MCF 10A (cell line): ENCODE measurements at regions of chr3 and their contacts with region 1.

Region 1: DNA sequence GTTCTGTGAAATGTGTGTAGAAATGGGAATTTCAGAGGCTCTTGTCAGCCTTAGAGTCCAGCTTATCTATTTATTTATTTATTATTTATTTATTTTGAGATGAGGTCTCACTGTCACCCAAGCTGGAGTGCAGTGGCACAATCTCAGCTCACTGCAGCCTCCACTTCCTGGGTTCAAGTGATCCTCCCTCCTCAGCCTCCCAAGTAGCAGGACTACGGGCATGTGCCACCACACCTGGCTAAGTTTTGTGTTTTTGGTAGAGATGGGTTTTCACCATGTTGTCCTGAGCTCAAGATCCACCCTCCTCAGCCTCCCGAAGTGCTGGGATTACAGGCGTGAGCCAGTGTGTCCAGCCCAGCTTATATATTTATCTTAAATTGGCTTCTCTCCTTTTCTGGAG is 11.5 kb downstream of the CNOT10 start:
- DNase-seq: no peak
- H3K4me3 Mint-ChIP-seq: no peak overlapping the region
- H3K27ac Mint-ChIP-seq: no peak overlapping the region
- H3K4me1 Mint-ChIP-seq: no peaks in the 10 kb centered on the region
- H3K27me3 Mint-ChIP-seq: no peaks in the 10 kb centered on the region
- CTCF ChIP-seq: no peak

Region 2: DNA sequence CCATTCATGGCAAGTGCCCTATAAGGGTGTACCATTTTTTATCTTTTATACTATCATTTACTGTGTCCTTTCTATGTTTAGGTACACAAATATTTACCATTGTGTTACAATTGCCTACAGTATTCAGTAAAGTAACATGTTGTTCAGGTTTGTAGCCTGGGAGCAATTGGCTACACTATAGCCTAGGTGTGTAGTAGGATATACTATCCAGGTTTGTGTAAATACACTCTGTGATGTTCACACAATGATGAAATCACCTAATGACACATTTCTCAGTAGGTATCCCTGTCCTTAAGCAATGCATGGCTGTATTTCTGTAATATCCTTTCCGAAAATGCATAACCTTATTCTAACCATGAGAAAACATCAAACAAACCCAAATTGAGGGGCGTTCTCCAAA is 29.4 kb before region 1 on chr3:
- CTCF ChIA-PET with region 1: no interaction called
- POLR2A ChIA-PET with region 1: no interaction called
- intact Hi-C with region 1: no loop called
- DNase-seq: no peak
- H3K4me3 Mint-ChIP-seq: no peak overlapping the region
- H3K27ac Mint-ChIP-seq: no peak overlapping the region
- H3K4me1 Mint-ChIP-seq: no peaks in the 10 kb centered on the region
- H3K27me3 Mint-ChIP-seq: peaks cover 30% of the 10 kb centered on the region
- CTCF ChIP-seq: no peak

Region 3: DNA sequence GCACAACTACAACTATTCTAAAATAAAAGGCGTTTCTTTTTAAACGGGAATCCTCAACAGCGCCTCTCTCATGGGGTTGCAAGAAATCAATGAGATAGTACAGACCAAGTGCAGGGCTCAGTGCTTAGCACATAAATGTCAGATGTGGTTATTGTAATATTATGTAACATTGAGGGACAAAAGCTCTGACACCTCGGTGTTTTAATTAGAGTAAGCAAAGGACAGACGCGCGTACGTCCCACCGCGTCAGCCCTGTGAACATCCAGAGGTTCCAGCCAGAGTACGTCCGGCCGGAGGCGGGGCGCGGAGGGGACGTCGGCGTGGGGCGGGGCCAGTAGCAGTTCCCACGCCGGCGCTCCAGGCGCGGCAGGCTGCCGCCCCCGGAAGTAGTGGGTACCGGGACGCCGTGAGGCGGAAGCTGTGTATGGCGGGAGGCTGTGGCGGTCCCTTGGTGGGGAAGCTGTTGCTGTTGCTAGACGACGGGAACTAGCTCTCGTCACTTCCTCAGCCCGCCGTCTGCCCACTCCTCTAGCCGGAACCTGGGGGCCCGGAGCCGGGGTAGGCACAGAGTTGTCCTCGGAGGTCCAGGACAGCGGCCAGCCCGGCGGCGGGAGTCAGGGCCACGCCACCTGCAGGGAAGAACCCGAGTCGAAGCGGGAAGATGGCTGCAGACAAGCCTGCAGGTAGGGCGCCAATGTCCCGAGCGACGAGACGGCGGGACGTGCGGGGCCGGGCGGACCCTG is 11.6 kb before region 1 on chr3 and contains the start of gene CNOT10:
- CTCF ChIA-PET with region 1: interaction called, 3 read pairs
- POLR2A ChIA-PET with region 1: interaction called, 12 read pairs
- intact Hi-C with region 1: no loop called
- DNase-seq: peak; percentile 93
- H3K4me3 Mint-ChIP-seq: peak within 1 kb of the TSS; percentile 89
- H3K27ac Mint-ChIP-seq: peak within 1 kb of the TSS; percentile 85
- H3K4me1 Mint-ChIP-seq: peaks cover 26% of the 10 kb centered on the region
- H3K27me3 Mint-ChIP-seq: no peaks in the 10 kb centered on the region
- CTCF ChIP-seq: no peak
- total RNA-seq, gene CNOT10: 47.1 and 53.1 TPM in 2 replicates